ENCODE measurements at regions of chr2 and their contacts with region 1.

Region 1: DNA sequence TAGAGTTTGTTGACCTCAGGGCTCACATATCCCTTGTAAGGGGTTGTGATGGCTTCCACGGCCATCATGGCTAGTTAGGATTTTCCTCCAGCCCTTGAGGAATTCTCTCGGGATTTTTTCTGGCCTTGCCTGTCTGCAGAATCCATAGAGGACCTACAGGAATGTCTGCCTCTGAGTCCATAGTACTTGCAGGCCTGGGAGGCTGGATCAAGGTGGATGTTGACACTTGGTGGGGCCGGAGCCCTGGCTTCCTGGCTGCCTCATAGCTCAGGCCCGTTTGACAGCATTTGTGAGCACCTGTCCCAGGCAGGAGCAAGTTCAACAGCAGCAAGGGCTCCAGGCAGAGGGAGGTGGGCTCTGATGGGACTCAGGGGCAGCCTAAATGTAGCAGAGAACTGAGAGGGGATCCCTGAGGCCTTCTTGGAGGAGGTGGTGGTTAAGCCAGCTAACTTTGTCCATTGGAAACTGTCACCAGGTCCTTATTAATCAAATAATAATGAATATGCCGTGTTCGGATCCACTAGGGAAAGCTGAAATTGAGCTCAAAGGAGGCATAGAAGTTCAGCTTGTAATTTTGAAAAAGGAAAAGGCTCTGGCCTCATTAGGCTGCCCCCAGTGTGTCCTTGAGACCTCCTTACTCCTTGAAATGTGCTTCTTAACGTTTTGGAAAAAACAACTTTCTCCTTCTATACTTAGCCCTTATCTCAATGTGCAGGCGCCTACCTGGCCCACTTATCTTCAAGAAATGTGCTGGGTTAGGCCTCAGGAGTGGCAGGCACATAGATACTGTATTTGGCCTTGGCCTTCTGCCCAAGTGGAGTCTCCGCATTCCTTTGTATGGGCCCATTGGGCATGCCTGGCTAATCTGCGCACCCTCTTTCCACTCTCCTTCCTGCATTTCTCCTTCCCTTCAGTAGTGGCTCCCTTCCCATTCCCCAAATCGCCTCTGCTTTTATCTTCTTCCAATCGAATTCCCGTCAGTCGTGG is 66.9 kb downstream of the HPCAL1 start:
- DNase-seq: peak; percentile 83
- ATAC-seq: peak; percentile 76
- H3K4me3 ChIP-seq: peak overlapping the region; percentile 27 to 69 (median 41); a peak in 5 of 6 replicates
- H3K27ac ChIP-seq: peak overlapping the region; percentile 49
- H3K4me1 ChIP-seq: peaks cover 66% of the 10 kb centered on the region
- H3K27me3 ChIP-seq: no peaks in the 10 kb centered on the region
- CTCF ChIP-seq: peak; percentile 45
- EP300 ChIP-seq: peak in 1 of 2 experiments; percentile 24; a peak in 1 of 4 replicates
- POLR2A ChIP-seq: no peak
- RAD21 ChIP-seq: peak; percentile 34

Region 2: DNA sequence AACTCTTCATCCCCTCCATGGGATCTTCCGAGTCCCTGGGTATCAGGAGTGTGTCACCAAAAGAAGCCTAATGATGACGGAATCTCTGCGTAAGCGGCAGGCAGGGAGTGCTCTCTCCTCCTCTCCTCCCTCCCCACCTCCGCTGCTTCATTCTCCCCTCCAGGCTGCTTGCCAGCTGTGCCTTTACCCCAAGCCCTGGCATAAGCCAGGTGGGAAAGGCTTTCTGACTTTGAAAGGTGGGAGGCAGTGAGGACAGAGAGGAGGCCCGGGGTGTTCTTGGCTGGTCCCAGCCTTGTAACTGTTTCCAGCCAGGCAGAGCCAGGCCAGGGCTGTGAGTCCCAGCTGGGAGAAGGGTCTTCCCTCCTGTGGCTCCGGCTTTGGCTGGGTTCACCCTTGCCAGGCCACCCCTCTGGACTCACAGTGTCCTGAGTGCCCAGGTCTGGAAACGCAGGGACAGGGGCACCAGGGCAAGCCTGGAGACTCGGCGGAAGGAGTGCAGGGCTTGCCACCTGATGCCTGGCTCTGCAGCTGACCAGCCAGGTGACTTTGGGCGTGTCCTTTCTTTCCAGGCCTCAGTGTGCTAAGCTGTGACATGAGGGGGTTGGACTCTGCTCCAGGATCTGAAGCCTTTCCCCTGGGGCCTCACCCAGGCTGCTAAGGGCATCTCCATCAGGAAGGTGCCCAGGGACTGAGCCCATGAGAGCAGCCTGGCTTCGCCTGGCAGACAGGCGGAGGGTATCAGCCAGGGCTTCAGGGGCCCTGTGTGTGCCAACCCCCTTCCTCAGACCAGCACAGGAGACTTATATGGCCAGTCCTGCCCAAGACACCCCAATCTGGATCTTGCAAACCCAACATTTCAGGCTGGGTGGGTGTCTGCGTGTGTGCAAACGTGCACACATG is 99.6 kb before region 1 on chr2:
- CTCF ChIA-PET with region 1: interaction called, 3 read pairs
- POLR2A ChIA-PET with region 1: interaction called, 3 read pairs
- in situ Hi-C with region 1: no loop called
- intact Hi-C with region 1: loop called (anchors 2 kb)
- DNase-seq: no peak
- ATAC-seq: peak; percentile 12
- H3K4me3 ChIP-seq: peak overlapping the region in 1 of 3 experiments; percentile 50; a peak in 1 of 6 replicates
- H3K27ac ChIP-seq: no peak overlapping the region
- H3K4me1 ChIP-seq: peaks cover 63% of the 10 kb centered on the region
- H3K27me3 ChIP-seq: peaks cover 12 to 52% of the 10 kb centered on the region in 2 experiments
- CTCF ChIP-seq: no peak
- EP300 ChIP-seq: no peak
- POLR2A ChIP-seq: no peak
- RAD21 ChIP-seq: no peak

Region 3: DNA sequence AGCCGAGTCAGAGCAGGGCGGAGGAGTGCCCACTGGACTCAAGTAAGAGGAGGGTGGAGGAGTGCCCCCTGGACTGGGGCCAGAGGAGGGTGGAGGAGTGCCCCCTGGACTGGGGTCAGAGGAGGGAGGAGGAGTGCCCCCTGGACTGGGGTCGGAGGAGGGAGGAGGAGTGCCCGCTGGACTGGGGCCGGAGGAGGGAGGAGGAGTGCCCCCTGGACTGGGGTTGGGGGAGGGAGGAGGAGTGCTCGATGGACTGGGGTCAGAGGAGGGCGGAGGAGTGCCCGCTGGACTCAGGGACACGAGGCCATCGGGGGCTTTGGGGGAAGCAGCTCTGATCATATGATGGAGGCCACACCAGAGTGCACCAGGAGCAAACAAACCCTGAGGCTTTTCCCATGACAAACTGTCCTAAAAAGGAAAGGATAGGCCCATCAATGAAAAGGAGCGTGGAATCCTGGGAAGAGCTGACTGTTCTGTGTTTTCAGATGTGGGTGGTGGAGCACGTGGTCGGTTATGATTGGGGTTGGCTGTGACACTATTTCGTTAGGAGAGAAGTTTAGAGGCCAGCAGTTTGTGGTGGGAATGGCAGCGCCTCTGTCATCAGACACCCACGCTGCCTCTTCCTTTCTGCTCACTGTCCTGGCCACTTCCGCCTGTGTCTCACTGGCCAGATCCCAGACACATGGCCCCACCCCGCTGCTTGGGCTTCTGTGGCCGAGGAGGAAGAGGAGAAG is 91.4 kb before region 1 on chr2:
- CTCF ChIA-PET with region 1: no interaction called
- POLR2A ChIA-PET with region 1: interaction called, 11 read pairs
- in situ Hi-C with region 1: no loop called
- intact Hi-C with region 1: no loop called
- DNase-seq: peak; percentile 87
- ATAC-seq: peak; percentile 69
- H3K4me3 ChIP-seq: peak overlapping the region; percentile 27 to 78 (median 52)
- H3K27ac ChIP-seq: peak overlapping the region; percentile 69
- H3K4me1 ChIP-seq: peaks cover 47% of the 10 kb centered on the region
- H3K27me3 ChIP-seq: peaks cover 3 to 18% of the 10 kb centered on the region in 2 experiments; a peak in 4 of 5 replicates
- CTCF ChIP-seq: peak; percentile 4
- EP300 ChIP-seq: peak in 1 of 2 experiments; percentile 52; a peak in 2 of 4 replicates
- POLR2A ChIP-seq: peak in 1 of 2 experiments; percentile 43; a peak in 1 of 4 replicates
- RAD21 ChIP-seq: no peak

Region 4: DNA sequence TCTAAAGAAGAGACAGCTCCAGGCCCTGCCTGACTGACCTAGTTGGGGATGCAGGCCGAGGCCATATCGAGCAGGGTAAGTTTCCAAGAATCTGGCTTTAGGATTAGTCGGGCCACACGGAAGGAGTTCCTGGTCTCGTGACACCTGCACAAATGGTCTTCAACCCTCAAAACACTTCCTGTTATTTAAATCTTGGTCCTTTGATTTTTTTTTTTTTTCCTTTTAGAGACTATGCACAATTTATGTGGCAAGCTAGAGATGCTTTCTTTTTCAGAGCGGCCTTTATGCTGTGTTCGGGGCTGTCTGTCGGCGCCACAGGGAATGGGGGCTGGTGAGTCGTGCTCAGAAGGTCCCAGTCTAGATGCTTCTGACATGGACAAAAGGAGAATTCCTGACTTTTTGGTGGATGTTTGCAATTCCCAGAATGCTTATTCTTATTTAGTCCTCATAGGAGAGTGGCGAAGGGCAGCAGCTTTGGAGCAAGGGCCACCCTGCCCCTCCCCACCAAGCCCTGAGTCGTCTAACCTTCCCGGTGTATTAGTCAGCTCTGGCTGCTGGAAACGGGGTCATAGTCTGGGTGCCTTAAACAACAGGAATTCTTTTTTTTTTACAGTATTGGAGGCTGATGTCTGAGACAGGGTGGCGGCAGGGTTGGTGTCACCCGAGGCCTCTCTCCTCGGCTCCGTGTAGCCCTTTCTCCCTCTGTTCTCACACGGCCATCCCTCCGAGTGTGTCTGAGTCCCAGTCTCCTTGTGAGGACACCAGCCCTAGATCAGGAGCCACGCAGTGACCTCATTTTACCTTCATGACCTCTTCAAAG is 39.5 kb before region 1 on chr2:
- CTCF ChIA-PET with region 1: no interaction called
- POLR2A ChIA-PET with region 1: interaction called, 9 read pairs
- in situ Hi-C with region 1: no loop called
- intact Hi-C with region 1: loop called (anchors 2 kb)
- DNase-seq: peak; percentile 78
- ATAC-seq: peak; percentile 65
- H3K4me3 ChIP-seq: peak overlapping the region; percentile 47 to 67 (median 54)
- H3K27ac ChIP-seq: peak overlapping the region; percentile 60
- H3K4me1 ChIP-seq: peaks cover 84% of the 10 kb centered on the region
- H3K27me3 ChIP-seq: no peaks in the 10 kb centered on the region; a peak in 1 of 5 replicates
- CTCF ChIP-seq: no peak
- EP300 ChIP-seq: peak; percentile 10 to 57; a peak in 1 of 4 replicates
- POLR2A ChIP-seq: peak in 1 of 2 experiments; percentile 35; a peak in 1 of 4 replicates
- RAD21 ChIP-seq: no peak

Region 5: DNA sequence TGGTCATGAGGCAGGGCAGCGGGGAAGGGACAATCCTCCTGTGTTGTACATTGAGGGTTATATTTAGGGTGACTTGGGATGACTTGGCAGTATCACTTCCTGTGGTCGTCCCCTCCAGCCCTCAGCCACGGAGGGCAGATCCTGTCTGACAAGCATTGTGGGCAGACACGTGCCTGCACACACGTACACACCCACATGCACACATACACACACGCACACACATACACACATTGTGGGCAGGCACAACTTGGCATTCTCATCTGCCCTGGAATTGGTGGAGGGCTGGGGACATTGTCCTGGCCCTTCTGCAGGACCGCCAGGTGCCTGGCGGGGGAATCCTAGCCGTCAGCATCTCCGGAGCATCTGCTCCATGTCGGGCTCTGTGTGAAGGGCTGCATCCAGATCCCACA is 31.0 kb after region 1 on chr2:
- CTCF ChIA-PET with region 1: no interaction called
- POLR2A ChIA-PET with region 1: interaction called, 18 read pairs
- in situ Hi-C with region 1: loop called (anchors 5 kb)
- intact Hi-C with region 1: loop called (anchors 2 kb)
- DNase-seq: no peak
- ATAC-seq: no peak
- H3K4me3 ChIP-seq: peak overlapping the region in 1 of 3 experiments; percentile 47; a peak in 1 of 6 replicates
- H3K27ac ChIP-seq: peak overlapping the region; percentile 83
- H3K4me1 ChIP-seq: peaks cover 34% of the 10 kb centered on the region
- H3K27me3 ChIP-seq: no peaks in the 10 kb centered on the region
- CTCF ChIP-seq: no peak
- EP300 ChIP-seq: no peak
- POLR2A ChIP-seq: no peak
- RAD21 ChIP-seq: no peak

Region 6: DNA sequence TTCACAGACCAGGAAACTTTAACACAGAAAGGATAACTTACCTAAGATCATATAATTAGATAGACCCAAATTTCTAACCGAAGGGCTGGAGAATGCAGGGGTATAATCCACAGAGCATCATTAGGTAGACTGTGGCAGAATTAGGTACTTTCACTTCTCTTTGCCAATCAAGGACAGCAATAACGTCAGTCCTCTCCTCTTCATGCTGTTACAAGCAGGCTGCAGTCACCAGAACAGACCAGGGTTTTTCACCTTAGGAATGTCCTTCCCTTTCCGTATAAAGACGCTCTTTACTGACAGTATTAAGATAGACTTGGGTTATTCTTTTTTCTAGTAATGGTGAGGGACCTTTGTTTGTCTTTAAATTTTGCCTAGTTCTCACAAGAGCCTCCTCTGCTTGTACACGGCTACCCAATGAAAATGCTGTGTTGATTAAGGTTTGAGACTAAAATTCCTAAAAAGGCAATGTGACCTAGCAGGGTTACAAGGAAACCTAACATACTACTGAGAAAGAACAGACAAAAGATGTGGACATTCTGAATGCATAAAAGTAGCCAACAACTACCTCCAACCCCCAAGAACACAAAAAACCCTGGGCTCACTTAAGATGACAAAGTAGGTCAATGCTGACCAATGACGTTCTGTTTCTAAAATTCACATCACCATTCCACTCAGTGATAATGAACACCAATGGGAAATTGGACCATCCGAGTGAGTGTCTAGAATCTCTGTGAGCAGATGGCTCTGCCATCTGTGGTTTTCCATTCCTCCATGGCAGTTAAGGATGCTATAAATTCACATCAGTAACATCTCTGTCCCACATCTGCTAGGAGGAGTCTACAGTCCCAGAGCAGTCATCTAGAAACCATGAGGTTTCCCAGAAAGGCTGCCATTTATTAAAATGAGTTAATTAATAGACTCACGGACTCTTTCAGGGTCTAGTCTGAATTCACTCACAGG is 440.9 kb after region 1 on chr2:
- CTCF ChIA-PET with region 1: no interaction called
- POLR2A ChIA-PET with region 1: no interaction called
- in situ Hi-C with region 1: no loop called
- intact Hi-C with region 1: no loop called
- DNase-seq: no peak
- ATAC-seq: no peak
- H3K4me3 ChIP-seq: peak overlapping the region; percentile 63 to 87 (median 73); a peak in 5 of 6 replicates
- H3K27ac ChIP-seq: no peak overlapping the region
- H3K4me1 ChIP-seq: peaks cover 74% of the 10 kb centered on the region
- H3K27me3 ChIP-seq: peaks cover 0 to 7% of the 10 kb centered on the region in 2 experiments; a peak in 1 of 5 replicates
- CTCF ChIP-seq: no peak
- EP300 ChIP-seq: no peak
- POLR2A ChIP-seq: no peak
- RAD21 ChIP-seq: no peak

Measured in HepG2 (cell line).